Heart left ventricle (tissue), 16 donors: ENCODE measurements at regions of chrX and their contacts with region 1.

Region 1: DNA sequence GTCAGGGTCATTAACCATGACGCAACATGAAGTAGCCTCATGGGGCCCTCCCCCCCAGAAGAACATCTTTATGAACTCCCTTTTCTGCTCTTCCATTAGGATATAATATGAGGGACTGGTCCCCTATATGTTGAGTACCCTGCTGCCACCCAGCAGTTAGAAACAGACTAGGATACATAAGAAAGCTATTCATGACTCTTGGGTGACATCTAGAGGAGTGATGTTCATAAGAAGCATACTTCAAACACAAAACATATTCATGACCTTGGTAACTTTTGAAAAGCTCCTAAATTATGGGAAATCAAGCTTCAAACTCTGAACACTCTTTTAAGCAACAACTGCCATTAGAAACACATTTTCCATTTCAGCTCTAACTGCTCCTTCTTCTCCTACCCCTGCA is 155.2 kb upstream of the SPIN4 start:
- DNase-seq: no peak
- ATAC-seq: peak in 3 of 4 donors; percentile 42 to 62 (median 54)
- H3K4me3 ChIP-seq: no peak overlapping the region
- H3K27ac ChIP-seq: no peak overlapping the region
- H3K4me1 ChIP-seq: peaks cover 0 to 7% (median 0%) of the 10 kb centered on the region in 12 donors
- H3K27me3 ChIP-seq: no peaks in the 10 kb centered on the region
- CTCF ChIP-seq: peak in 8 of 12 donors; percentile 9 to 46 (median 33)
- POLR2A ChIP-seq: no peak

Region 2: GRCh38 chrX:63350941-63351616 is 155.2 kb before region 1 on chrX and contains the start of gene SPIN4:
- intact Hi-C with region 1: loop called in 1 of 10 experiments (anchors 10 kb)
- DNase-seq: peak; percentile 85 to 90 (median 86)
- ATAC-seq: peak; percentile 94 to 99 (median 99)
- H3K4me3 ChIP-seq: peak within 1 kb of the TSS; percentile 24 to 92 (median 62)
- H3K27ac ChIP-seq: peak within 1 kb of the TSS in 9 of 12 donors; percentile 29 to 82 (median 56)
- H3K4me1 ChIP-seq: peaks cover 0 to 9% (median 0%) of the 10 kb centered on the region in 12 donors
- H3K27me3 ChIP-seq: peaks cover 0 to 5% (median 0%) of the 10 kb centered on the region in 9 donors
- CTCF ChIP-seq: no peak
- POLR2A ChIP-seq: peak in 1 of 2 donors; percentile 54
- total RNA-seq, gene SPIN4: 0.31 to 1.7 (median 0.72) TPM

Region 3: DNA sequence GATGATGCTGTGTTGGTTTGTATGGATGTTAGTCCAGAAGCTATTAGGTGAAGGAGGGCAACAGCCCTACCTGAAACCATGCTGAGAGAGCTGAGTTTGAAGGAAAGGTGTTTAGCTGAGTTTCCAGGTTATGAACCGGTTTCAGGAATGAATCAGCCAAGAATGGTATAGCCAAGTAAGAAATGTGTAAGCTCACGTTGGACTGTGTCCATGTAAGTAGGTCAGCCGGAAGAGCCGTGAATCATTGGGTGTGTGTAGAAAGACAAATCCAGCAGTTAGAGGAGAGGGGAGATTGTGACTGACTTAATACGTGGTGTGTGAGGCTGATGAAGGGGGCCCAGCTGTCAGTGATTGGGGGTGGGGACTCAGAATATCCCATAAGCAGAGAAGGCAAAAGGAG is 78.0 kb before region 1 on chrX:
- intact Hi-C with region 1: no loop called
- DNase-seq: no peak
- ATAC-seq: no peak
- H3K4me3 ChIP-seq: no peak overlapping the region
- H3K27ac ChIP-seq: no peak overlapping the region
- H3K4me1 ChIP-seq: no peaks in the 10 kb centered on the region
- H3K27me3 ChIP-seq: no peaks in the 10 kb centered on the region
- CTCF ChIP-seq: no peak
- POLR2A ChIP-seq: no peak

Region 4: GRCh38 chrX:63441717-63442116 is 64.6 kb before region 1 on chrX:
- intact Hi-C with region 1: no loop called
- DNase-seq: no peak
- ATAC-seq: no peak
- H3K4me3 ChIP-seq: no peak overlapping the region
- H3K27ac ChIP-seq: no peak overlapping the region
- H3K4me1 ChIP-seq: no peaks in the 10 kb centered on the region
- H3K27me3 ChIP-seq: no peaks in the 10 kb centered on the region
- CTCF ChIP-seq: no peak
- POLR2A ChIP-seq: no peak

Region 5: GRCh38 chrX:63581398-63581797 is 75.1 kb after region 1 on chrX:
- intact Hi-C with region 1: no loop called
- DNase-seq: no peak
- ATAC-seq: no peak
- H3K4me3 ChIP-seq: no peak overlapping the region
- H3K27ac ChIP-seq: no peak overlapping the region
- H3K4me1 ChIP-seq: no peaks in the 10 kb centered on the region
- H3K27me3 ChIP-seq: no peaks in the 10 kb centered on the region
- CTCF ChIP-seq: no peak
- POLR2A ChIP-seq: no peak

Region 6: GRCh38 chrX:64377753-64378152 is 871.4 kb after region 1 on chrX:
- intact Hi-C with region 1: no loop called
- DNase-seq: no peak
- ATAC-seq: no peak
- H3K4me3 ChIP-seq: no peak overlapping the region
- H3K27ac ChIP-seq: no peak overlapping the region
- H3K4me1 ChIP-seq: no peaks in the 10 kb centered on the region
- H3K27me3 ChIP-seq: no peaks in the 10 kb centered on the region
- CTCF ChIP-seq: no peak
- POLR2A ChIP-seq: no peak